ENCODE measurements at regions of chr15 and their contacts with region 1.

Region 1: DNA sequence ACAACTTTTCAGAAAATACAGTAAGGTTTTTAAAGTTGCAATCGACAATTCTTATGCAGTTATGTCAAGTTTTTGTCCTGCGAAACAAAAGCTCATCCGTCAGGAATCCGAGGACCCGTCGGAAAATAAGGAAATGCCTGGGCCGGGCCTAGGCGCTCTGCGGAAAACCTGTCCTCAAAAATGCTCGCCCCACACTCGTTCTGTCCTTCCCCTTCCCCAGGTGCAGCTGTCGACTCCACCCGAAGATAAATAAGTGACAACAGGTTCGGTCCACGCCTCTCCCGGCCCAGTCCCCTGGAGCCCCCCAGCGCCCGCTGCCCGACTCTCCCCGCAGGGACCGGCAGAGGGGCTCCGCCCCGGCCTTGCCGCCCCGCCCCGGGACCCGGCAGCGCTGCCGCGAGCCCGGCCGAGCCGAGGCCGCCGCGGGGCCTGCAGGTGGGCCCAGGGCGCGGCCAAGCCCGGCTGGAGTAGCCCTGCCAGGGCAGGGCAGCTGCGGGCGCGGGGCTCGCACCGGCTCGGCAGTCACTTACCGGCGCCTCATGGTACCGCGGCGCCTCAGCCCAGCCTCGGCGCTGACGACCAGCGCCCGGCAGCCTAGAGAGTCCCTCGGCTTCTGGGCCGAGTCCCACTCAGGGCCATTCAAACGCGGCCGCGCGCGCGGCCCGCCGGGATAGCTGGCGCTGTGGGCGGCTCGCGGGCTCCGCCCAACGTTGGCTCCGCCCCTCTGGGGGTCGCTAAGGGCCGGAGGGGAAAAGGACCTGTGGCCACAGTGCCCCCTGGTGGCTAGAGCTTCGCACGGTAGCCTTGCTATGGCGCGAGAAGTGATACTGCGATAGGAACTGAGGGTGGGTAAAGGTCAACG is at the start of gene KATNBL1:
- DNase-seq: peak; percentile 83
- H3K4me3 Mint-ChIP-seq: peak within 1 kb of the TSS; percentile 58
- H3K27ac Mint-ChIP-seq: no peak within 1 kb of the TSS
- H3K4me1 Mint-ChIP-seq: no peaks in the 10 kb centered on the region
- H3K27me3 Mint-ChIP-seq: no peaks in the 10 kb centered on the region
- CTCF ChIP-seq: peak; percentile 32
- total RNA-seq, gene KATNBL1: 12.9 and 14.8 TPM in 2 replicates

Region 2: DNA sequence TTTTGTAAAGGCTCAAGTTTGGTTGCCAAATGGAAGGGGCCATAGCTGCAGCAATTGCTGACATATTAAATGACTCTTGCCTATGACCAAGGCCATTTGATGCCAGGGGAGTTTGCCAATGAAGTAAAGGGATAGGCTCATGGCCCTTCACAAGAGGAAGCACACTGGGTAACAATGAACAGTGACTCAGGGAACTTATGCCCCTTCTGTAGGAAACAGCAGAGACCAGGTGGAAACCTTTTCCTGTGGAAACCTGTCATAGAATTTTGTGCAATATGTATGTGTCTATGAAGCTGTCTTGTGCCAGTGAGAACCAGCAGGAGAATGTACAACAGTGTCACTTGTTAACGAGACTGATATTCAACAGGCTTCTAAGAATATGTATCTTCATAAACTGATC is 145.2 kb before region 1 on chr15:
- CTCF ChIA-PET with region 1: no interaction called
- intact Hi-C with region 1: loop called (anchors 5 kb)
- DNase-seq: no peak
- H3K4me3 Mint-ChIP-seq: no peak overlapping the region
- H3K27ac Mint-ChIP-seq: no peak overlapping the region
- H3K4me1 Mint-ChIP-seq: no peaks in the 10 kb centered on the region
- H3K27me3 Mint-ChIP-seq: no peaks in the 10 kb centered on the region
- CTCF ChIP-seq: no peak

Region 3: DNA sequence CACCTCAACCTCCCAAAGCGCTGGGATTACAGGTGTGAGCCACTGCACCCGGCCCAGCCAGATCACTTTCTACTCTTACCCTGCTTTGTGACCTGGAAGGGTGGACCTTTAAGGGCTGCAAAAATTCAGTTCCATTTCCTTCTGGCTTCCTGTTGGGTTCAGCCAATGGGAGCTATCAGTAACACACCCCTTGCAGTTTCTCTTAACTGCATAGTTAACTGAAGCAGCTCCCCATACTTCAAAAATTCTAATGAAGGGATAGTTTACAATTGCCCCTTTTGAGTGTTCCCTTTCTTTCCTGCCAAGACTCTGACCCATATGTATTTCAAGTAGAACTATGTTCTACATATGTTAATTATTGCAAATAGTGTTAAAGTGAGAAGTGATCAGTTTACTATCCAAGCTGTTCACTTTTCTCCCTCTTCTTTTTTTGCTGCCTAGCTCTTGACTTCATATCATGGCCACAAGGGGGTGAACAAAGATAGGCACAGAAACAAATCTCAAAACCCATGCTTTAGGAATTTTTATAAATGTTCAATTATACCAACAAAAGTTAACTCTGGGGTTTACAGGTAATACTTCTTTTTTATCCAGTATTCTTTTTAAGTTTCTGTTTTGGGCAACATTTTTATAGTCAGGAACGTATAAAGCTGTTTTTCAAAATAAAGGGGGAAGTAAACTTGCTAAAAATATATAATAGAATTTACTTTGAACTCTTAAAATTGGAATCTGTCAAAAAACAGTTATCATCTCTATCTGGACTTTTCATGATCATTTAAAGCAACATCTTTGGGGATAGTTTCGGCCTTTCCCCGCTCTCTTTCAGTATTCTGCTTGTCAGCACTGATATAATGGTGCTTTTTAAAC is 99.6 kb before region 1 on chr15:
- CTCF ChIA-PET with region 1: interaction called, 13 read pairs
- intact Hi-C with region 1: loop called (anchors 1 kb)
- DNase-seq: peak; percentile 1
- H3K4me3 Mint-ChIP-seq: no peak overlapping the region
- H3K27ac Mint-ChIP-seq: no peak overlapping the region
- H3K4me1 Mint-ChIP-seq: no peaks in the 10 kb centered on the region
- H3K27me3 Mint-ChIP-seq: no peaks in the 10 kb centered on the region
- CTCF ChIP-seq: no peak

Region 4: GRCh38 chr15:34147371-34148140 is 62.1 kb before region 1 on chr15:
- CTCF ChIA-PET with region 1: no interaction called
- intact Hi-C with region 1: no loop called
- DNase-seq: no peak
- H3K4me3 Mint-ChIP-seq: no peak overlapping the region
- H3K27ac Mint-ChIP-seq: no peak overlapping the region
- H3K4me1 Mint-ChIP-seq: no peaks in the 10 kb centered on the region
- H3K27me3 Mint-ChIP-seq: no peaks in the 10 kb centered on the region
- CTCF ChIP-seq: no peak

Region 5: DNA sequence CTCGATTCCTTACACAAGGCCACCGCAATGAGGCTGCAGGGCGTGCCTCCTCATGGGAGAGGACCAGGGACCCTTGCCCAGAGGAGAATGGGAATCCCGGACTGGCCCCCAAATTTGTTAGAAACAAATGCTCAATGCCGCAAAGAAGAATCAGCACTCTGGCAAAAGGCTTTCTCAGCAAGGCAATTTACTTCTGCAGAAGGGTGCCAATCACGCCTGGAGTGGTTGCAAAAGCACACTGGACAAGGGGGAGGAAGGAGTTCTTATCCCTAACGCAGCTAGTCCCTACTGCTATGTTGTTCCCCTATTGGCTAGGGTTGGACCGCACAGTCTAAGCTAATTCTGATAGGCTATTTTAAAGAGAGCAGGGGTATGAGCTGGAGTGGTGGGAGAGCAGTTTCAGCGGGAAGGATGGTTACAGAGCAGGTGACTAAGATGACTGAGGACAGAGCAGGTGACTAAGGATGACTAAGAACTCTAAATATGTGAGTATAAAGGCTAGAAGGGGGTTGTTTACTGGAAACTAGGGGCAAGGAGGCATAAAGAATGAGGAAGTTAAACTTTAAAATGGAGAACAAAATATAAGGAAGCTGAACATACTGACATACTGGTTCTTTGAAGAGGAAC is 48.2 kb before region 1 on chr15:
- CTCF ChIA-PET with region 1: no interaction called
- intact Hi-C with region 1: no loop called
- DNase-seq: no peak
- H3K4me3 Mint-ChIP-seq: no peak overlapping the region
- H3K27ac Mint-ChIP-seq: no peak overlapping the region
- H3K4me1 Mint-ChIP-seq: no peaks in the 10 kb centered on the region
- H3K27me3 Mint-ChIP-seq: no peaks in the 10 kb centered on the region
- CTCF ChIP-seq: no peak

Region 6: DNA sequence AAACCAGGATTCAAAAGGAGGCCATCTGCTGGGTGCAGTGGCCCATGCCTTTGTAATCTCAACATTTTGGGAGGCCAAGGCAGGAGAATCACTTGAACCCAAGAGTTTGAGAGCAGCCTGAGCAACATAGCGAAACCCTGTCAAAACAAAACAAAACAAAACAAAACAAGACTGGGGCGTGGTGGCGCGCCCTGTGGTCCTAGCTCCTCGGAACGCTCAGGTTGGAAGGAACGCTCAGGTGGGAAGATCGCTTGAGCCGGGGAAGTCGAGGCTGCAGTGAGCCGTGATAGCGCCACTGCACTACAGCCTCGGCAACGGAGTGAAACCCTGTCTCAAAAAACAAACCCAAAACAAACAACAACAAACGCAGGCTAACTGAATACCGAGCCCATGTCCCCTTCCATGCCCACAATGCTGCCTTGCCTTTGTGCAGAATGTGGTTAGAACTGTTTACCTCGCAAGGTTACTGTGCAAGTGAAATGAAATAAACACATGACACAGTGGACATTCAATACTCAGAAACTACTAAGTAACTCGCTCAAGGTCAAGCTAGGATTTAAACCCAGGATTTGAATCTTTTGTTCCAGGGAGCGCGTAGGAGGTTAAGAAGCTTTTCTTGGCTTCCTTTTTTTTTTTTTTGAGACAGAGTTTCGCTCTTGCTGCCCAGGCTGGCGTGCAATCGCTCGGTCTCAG is 14.4 kb after region 1 on chr15:
- CTCF ChIA-PET with region 1: no interaction called
- intact Hi-C with region 1: no loop called
- DNase-seq: no peak
- H3K4me3 Mint-ChIP-seq: peak overlapping the region; percentile 83
- H3K27ac Mint-ChIP-seq: peak overlapping the region; percentile 98
- H3K4me1 Mint-ChIP-seq: no peaks in the 10 kb centered on the region
- H3K27me3 Mint-ChIP-seq: no peaks in the 10 kb centered on the region
- CTCF ChIP-seq: no peak

Measured in Calu3 (cell line).